CD4-positive, alpha-beta memory T cell (primary cell): ENCODE measurements at regions of chr7 and their contacts with region 1.

Region 1: DNA sequence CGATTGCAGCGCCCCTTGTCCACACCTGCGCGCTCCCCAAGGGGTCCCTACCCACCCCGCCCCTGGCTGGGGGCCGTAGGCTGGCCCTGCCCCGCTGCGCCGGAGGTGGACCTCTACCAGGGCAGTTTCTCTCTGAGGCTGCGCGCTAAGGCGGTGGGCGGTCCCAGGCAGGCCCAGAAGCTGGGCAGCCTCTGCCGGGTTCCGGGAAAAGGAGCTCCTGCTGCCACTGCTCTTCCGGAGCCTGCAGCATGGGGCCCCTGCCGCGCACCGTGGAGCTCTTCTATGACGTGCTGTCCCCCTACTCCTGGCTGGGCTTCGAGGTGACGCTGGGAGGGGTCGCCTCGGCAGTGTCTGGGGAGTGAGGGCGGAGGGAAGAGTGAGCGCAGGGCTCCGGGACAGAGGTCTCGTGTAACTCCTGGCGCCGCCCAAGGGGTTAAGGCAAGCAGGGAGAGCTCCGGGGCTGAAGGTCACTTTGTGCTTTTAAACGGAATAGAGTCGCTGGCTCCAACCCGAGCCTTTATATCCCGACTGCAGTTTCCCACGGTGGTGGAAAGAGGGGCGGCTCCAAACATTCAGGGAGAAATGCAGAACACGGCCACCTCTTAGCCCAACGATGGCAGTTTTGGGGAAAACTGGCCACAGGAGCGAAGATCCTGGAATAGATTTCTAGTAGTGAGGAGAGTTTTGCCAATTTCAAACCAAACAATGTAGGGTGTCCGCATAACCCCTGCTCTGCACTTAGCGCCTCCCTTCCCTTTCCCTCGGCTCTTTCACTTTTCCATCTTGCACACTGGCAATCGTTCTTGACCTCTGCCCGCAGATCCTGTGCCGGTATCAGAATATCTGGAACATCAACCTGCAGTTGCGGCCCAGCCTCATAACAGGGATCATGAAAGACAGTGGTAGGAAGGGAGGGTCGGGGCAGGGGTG is at the start of gene GSTK1:
- DNase-seq: peak; percentile 69 to 86 (median 75)
- H3K4me3 ChIP-seq: peak within 1 kb of the TSS; percentile 89 to 90
- H3K4me3 Mint-ChIP-seq: peak within 1 kb of the TSS; percentile 93 to 99 (median 96)
- H3K27ac ChIP-seq: peak within 1 kb of the TSS; percentile 89
- H3K27ac Mint-ChIP-seq: peak within 1 kb of the TSS; percentile 91 to 98 (median 94)
- H3K4me1 ChIP-seq: peaks cover 72% of the 10 kb centered on the region
- H3K4me1 Mint-ChIP-seq: peaks cover 40 to 81% (median 62%) of the 10 kb centered on the region in 4 donors
- H3K27me3 ChIP-seq: no peaks in the 10 kb centered on the region
- H3K27me3 Mint-ChIP-seq: no peaks in the 10 kb centered on the region
- total RNA-seq, gene GSTK1: 469 to 482 TPM

Region 2: GRCh38 chr7:143188994-143189393 is 74.5 kb before region 1 on chr7:
- CTCF ChIA-PET with region 1: no interaction called
- POLR2A ChIA-PET with region 1: no interaction called
- intact Hi-C with region 1: no loop called
- DNase-seq: no peak
- H3K4me3 ChIP-seq: no peak overlapping the region
- H3K4me3 Mint-ChIP-seq: no peak overlapping the region
- H3K27ac ChIP-seq: no peak overlapping the region
- H3K27ac Mint-ChIP-seq: no peak overlapping the region
- H3K4me1 ChIP-seq: no peaks in the 10 kb centered on the region
- H3K4me1 Mint-ChIP-seq: no peaks in the 10 kb centered on the region
- H3K27me3 ChIP-seq: no peaks in the 10 kb centered on the region
- H3K27me3 Mint-ChIP-seq: peaks cover 12 to 17% of the 10 kb centered on the region in 2 donors

Region 3: GRCh38 chr7:143279186-143280098 is 15.9 kb after region 1 on chr7:
- CTCF ChIA-PET with region 1: interaction called, 17 read pairs
- POLR2A ChIA-PET with region 1: interaction called, 62 read pairs
- intact Hi-C with region 1: loop called (anchors 2 kb)
- DNase-seq: peak; percentile 52 to 74 (median 60)
- H3K4me3 ChIP-seq: peak overlapping the region; percentile 1 to 48
- H3K4me3 Mint-ChIP-seq: peak overlapping the region; percentile 61 to 89 (median 81)
- H3K27ac ChIP-seq: peak overlapping the region; percentile 74
- H3K27ac Mint-ChIP-seq: peak overlapping the region; percentile 83 to 97 (median 94)
- H3K4me1 ChIP-seq: peaks cover 33% of the 10 kb centered on the region
- H3K4me1 Mint-ChIP-seq: peaks cover 34 to 40% (median 37%) of the 10 kb centered on the region in 4 donors
- H3K27me3 ChIP-seq: no peaks in the 10 kb centered on the region
- H3K27me3 Mint-ChIP-seq: no peaks in the 10 kb centered on the region

Region 4: GRCh38 chr7:143287935-143288826 is 24.6 kb after region 1 on chr7 and contains the start of gene CASP2:
- CTCF ChIA-PET with region 1: interaction called, 7 read pairs
- POLR2A ChIA-PET with region 1: interaction called, 43 read pairs
- intact Hi-C with region 1: loop called (anchors 1 kb)
- DNase-seq: peak; percentile 99 to 100 (median 99)
- H3K4me3 ChIP-seq: peak within 1 kb of the TSS; percentile 82 to 92
- H3K4me3 Mint-ChIP-seq: peak within 1 kb of the TSS; percentile 92 to 99 (median 96)
- H3K27ac ChIP-seq: peak within 1 kb of the TSS; percentile 78
- H3K27ac Mint-ChIP-seq: peak within 1 kb of the TSS; percentile 83 to 98 (median 95)
- H3K4me1 ChIP-seq: peaks cover 44% of the 10 kb centered on the region
- H3K4me1 Mint-ChIP-seq: peaks cover 39 to 75% (median 57%) of the 10 kb centered on the region in 4 donors
- H3K27me3 ChIP-seq: no peaks in the 10 kb centered on the region
- H3K27me3 Mint-ChIP-seq: no peaks in the 10 kb centered on the region
- total RNA-seq, gene CASP2: 94.3 to 96.1 TPM

Region 5: DNA sequence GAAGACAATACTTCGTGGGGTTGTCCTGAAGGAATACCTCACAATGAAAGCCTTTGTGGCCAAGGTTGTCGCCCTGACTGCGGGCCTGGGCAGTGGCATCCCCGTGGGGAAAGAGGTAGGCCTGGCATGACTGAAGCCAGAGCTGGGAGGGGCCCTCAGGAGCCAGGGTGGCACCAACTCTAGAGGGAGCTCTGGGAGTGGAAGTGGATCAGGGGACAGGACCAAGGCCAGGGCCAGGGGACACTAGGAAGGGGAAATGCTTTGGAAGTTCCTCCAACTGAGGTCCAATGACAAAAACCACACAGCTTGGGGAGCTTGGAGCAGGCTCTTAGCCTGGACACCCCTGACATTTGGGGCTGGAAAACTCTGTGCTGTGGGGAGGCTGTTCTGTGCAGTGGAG is 58.2 kb after region 1 on chr7:
- CTCF ChIA-PET with region 1: no interaction called
- POLR2A ChIA-PET with region 1: no interaction called
- intact Hi-C with region 1: no loop called
- DNase-seq: no peak
- H3K4me3 ChIP-seq: no peak overlapping the region
- H3K4me3 Mint-ChIP-seq: no peak overlapping the region
- H3K27ac ChIP-seq: no peak overlapping the region
- H3K27ac Mint-ChIP-seq: peak overlapping the region in 1 of 7 donors; percentile 23
- H3K4me1 ChIP-seq: no peaks in the 10 kb centered on the region
- H3K4me1 Mint-ChIP-seq: peaks cover 6 to 12% (median 9%) of the 10 kb centered on the region in 4 donors
- H3K27me3 ChIP-seq: no peaks in the 10 kb centered on the region
- H3K27me3 Mint-ChIP-seq: peaks cover 0 to 2% of the 10 kb centered on the region in 2 donors

Region 6: GRCh38 chr7:143929224-143929920 is 665.8 kb after region 1 on chr7:
- CTCF ChIA-PET with region 1: no interaction called
- POLR2A ChIA-PET with region 1: no interaction called
- intact Hi-C with region 1: no loop called
- DNase-seq: no peak
- H3K4me3 ChIP-seq: no peak overlapping the region
- H3K4me3 Mint-ChIP-seq: no peak overlapping the region
- H3K27ac ChIP-seq: no peak overlapping the region
- H3K27ac Mint-ChIP-seq: no peak overlapping the region
- H3K4me1 ChIP-seq: no peaks in the 10 kb centered on the region
- H3K4me1 Mint-ChIP-seq: peaks cover 0 to 1% (median 0%) of the 10 kb centered on the region in 4 donors
- H3K27me3 ChIP-seq: no peaks in the 10 kb centered on the region
- H3K27me3 Mint-ChIP-seq: peaks cover 2 to 6% of the 10 kb centered on the region in 2 donors